WTC11 (cell line): ENCODE measurements at regions of chr20 and their contacts with region 1.

Region 1: DNA sequence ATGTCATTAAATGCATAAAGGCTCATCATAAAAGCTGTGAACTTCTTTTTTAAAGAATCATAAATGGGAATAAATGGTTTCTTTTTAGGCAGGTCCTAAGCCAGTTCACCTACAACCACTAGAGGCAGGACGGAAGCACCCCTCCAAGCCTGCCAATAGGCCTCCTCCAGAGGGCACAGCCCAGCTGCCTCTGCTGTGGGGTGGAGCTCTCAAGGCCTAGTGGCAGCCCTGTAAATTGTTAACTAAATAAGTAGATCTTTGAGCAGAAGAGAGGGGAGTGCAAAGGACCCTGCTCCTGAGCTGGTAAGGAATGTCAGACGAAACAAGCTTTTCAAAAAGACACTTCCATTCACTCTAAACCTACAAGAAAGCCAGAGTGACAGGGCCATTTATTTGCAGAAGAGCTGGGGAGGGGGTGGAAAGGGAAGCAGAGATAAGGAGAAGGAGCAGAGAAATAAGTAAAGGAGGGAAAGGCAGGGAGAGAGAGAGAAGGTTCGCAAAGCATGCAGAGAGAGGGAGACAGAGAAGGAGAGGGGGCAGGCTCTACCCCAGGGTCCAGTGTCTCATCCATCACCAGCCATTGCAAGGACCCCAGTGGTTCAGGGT is 18.0 kb upstream of the MAFB start:
- DNase-seq: peak; percentile 70
- ATAC-seq: peak; percentile 100
- H3K4me3 Mint-ChIP-seq: no peak overlapping the region
- H3K27ac Mint-ChIP-seq: peak overlapping the region; percentile 52; the same call in 1 of the 2 replicates
- H3K4me1 Mint-ChIP-seq: peaks cover 11% of the 10 kb centered on the region
- H3K27me3 Mint-ChIP-seq: no peaks in the 10 kb centered on the region; the same call in none of the 2 replicates
- CTCF ChIP-seq: no peak

Region 2: GRCh38 chr20:40668449-40669228 is 38.4 kb before region 1 on chr20:
- CTCF ChIA-PET with region 1: no interaction called
- POLR2A ChIA-PET with region 1: no interaction called
- DNase-seq: no peak
- ATAC-seq: no peak
- H3K4me3 Mint-ChIP-seq: no peak overlapping the region
- H3K27ac Mint-ChIP-seq: no peak overlapping the region
- H3K4me1 Mint-ChIP-seq: peaks cover 17% of the 10 kb centered on the region
- H3K27me3 Mint-ChIP-seq: 0 out of 2 replicates have a peak, but pooled peaks cover 1% of the 10 kb centered on the region
- CTCF ChIP-seq: no peak

Region 3: GRCh38 chr20:40689943-40690835 is 16.9 kb before region 1 on chr20:
- CTCF ChIA-PET with region 1: interaction called, 22 read pairs
- POLR2A ChIA-PET with region 1: interaction called, 5 read pairs
- DNase-seq: peak; percentile 95
- ATAC-seq: peak; percentile 55
- H3K4me3 Mint-ChIP-seq: peak overlapping the region; percentile 78
- H3K27ac Mint-ChIP-seq: no peak overlapping the region
- H3K4me1 Mint-ChIP-seq: peaks cover 41% of the 10 kb centered on the region
- H3K27me3 Mint-ChIP-seq: peaks cover 96% of the 10 kb centered on the region
- CTCF ChIP-seq: peak; percentile 87

Region 4: GRCh38 chr20:40718982-40719729 is 12.1 kb after region 1 on chr20:
- CTCF ChIA-PET with region 1: interaction called, 11 read pairs
- POLR2A ChIA-PET with region 1: no interaction called
- DNase-seq: no peak
- ATAC-seq: no peak
- H3K4me3 Mint-ChIP-seq: no peak overlapping the region
- H3K27ac Mint-ChIP-seq: no peak overlapping the region
- H3K4me1 Mint-ChIP-seq: peaks cover 6% of the 10 kb centered on the region; the same call in 1 of the 2 replicates
- H3K27me3 Mint-ChIP-seq: no peaks in the 10 kb centered on the region
- CTCF ChIP-seq: no peak

Region 5: GRCh38 chr20:40797425-40797824 is 90.3 kb after region 1 on chr20:
- CTCF ChIA-PET with region 1: interaction called, 11 read pairs
- POLR2A ChIA-PET with region 1: no interaction called
- DNase-seq: no peak
- ATAC-seq: peak; percentile 81
- H3K4me3 Mint-ChIP-seq: no peak overlapping the region
- H3K27ac Mint-ChIP-seq: no peak overlapping the region
- H3K4me1 Mint-ChIP-seq: no peaks in the 10 kb centered on the region
- H3K27me3 Mint-ChIP-seq: no peaks in the 10 kb centered on the region
- CTCF ChIP-seq: peak; percentile 30; the same call in 1 of the 2 replicates

Region 6: DNA sequence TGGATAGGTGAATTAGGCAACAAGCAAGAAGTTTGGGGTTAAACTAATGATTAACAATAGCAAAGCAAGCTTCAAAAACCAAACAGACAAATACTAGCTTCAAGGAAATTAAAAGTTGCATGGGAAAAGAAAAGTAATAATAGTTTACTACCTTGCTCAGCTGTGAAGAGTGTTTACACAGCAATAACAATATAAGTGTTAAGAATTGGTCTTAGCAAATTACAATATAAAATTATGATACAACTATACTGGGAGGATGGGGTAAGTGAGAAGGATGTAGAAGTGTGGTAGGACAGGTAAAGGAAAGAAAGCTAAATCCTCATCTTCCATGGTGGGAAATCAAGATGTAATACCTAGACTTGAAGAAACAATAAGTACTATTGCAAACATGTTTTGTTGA is 119.6 kb after region 1 on chr20:
- CTCF ChIA-PET with region 1: no interaction called
- POLR2A ChIA-PET with region 1: no interaction called
- DNase-seq: no peak
- ATAC-seq: no peak
- H3K4me3 Mint-ChIP-seq: no peak overlapping the region
- H3K27ac Mint-ChIP-seq: no peak overlapping the region
- H3K4me1 Mint-ChIP-seq: no peaks in the 10 kb centered on the region; the same call in 1 of the 2 replicates
- H3K27me3 Mint-ChIP-seq: peaks cover 3% of the 10 kb centered on the region
- CTCF ChIP-seq: no peak

Region 7: GRCh38 chr20:40945754-40946450 is 238.8 kb after region 1 on chr20:
- CTCF ChIA-PET with region 1: interaction called, 24 read pairs
- POLR2A ChIA-PET with region 1: no interaction called
- DNase-seq: peak; percentile 73
- ATAC-seq: peak; percentile 96
- H3K4me3 Mint-ChIP-seq: no peak overlapping the region
- H3K27ac Mint-ChIP-seq: no peak overlapping the region
- H3K4me1 Mint-ChIP-seq: peaks cover 26% of the 10 kb centered on the region
- H3K27me3 Mint-ChIP-seq: peaks cover 6% of the 10 kb centered on the region
- CTCF ChIP-seq: no peak